MCF 10A (cell line): ENCODE measurements at regions of chr1 and their contacts with region 1.

Region 1: DNA sequence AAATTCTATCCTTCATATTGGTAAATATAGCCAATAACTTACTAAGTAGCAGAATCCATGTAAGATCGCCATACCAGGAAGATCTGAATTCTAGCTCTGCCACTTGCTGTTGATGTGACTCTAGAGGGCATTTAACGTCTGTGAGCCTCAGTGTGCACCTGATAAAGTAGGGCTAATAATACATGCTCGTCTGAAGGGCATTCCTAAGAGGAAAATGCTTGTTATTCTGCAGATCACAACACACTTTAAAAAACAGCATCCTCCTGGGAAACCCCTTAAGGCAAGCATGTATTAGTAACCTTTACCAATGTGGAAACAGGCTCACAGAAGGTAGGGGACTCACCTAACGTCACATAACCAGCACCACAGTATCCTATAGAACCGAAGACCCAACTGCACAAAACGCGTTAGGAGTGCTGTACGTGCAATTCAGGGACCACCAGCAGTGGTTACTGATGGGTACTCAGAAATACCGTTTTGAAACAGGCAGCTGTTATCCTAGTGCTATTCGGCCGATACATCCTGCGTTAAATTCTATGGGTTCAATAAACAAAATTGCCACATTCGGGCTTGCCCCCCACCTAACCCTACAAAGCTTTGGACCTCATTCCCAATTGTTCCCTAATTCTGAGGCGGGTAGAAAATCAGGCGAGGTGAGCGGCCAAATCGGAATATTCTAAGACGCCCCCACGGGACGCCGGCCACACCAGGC is 758 bp downstream of the DEPDC1 start:
- DNase-seq: peak; percentile 42
- H3K4me3 Mint-ChIP-seq: peak overlapping the region; percentile 86
- H3K27ac Mint-ChIP-seq: peak overlapping the region; percentile 74
- H3K4me1 Mint-ChIP-seq: peaks cover 18% of the 10 kb centered on the region
- H3K27me3 Mint-ChIP-seq: no peaks in the 10 kb centered on the region
- CTCF ChIP-seq: no peak

Region 2: GRCh38 chr1:68485431-68486022 is 10.6 kb before region 1 on chr1:
- CTCF ChIA-PET with region 1: interaction called, 10 read pairs
- POLR2A ChIA-PET with region 1: interaction called, 9 read pairs
- intact Hi-C with region 1: no loop called
- DNase-seq: no peak
- H3K4me3 Mint-ChIP-seq: no peak overlapping the region
- H3K27ac Mint-ChIP-seq: no peak overlapping the region
- H3K4me1 Mint-ChIP-seq: peaks cover 10% of the 10 kb centered on the region
- H3K27me3 Mint-ChIP-seq: no peaks in the 10 kb centered on the region
- CTCF ChIP-seq: no peak